ENCODE measurements at regions of chr7 and their contacts with region 1.

Region 1: GRCh38 chr7:44200647-44201461 is at the start of gene YKT6:
- DNase-seq: peak; percentile 93 to 96 (median 96)
- ATAC-seq: peak; percentile 99
- H3K4me3 ChIP-seq: peak within 1 kb of the TSS; percentile 92
- H3K27ac ChIP-seq: peak within 1 kb of the TSS; percentile 56
- H3K4me1 ChIP-seq: peaks cover 3% of the 10 kb centered on the region
- H3K27me3 ChIP-seq: no peaks in the 10 kb centered on the region
- total RNA-seq, gene YKT6: 48.1 to 63.4 (median 52.2) TPM

Region 2: DNA sequence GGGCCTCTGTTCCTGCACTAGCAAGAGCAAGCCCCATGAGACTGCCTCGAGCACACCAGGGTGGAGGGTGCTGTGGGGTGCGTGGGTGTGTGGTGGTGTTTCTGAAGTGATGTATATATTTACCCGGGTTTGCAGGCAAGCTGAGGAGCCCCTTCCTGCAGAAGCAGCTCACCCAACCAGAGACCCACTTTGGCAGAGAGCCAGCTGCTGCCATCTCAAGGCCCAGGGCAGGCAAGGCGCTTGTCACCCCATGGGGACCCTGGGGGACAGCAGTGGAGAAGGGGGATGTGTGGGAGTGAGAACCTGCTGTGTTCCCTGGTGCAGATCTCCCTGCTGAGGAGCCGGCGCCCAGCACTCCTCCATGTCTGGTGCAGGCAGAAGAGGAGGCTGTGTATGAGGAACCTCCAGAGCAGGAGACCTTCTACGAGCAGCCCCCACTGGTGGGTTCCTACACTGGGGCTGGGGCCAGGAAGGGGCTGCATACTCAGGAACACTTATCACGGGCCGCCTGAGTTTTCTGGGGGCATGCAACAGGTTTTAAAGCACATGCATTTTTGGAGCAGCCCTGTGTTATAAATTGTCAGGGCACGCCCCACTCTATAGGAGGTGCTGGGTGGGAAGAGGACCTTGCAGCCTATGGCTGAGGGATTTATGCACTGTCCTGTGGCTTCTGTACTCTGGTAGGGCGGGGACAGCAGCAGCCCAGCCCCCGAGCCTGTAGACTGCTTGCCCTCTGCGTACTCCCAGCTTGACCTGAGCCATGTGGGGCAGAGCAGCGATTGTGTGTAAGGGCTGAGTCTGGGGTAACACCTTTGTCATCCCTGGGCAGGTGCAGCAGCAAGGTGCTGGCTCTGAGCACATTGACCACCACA is 141.4 kb before region 1 on chr7:
- intact Hi-C with region 1: loop called in 1 of 4 experiments (anchors 10 kb)
- DNase-seq: peak in 2 of 3 donors; percentile 48 to 49
- ATAC-seq: no peak
- H3K4me3 ChIP-seq: no peak overlapping the region
- H3K27ac ChIP-seq: no peak overlapping the region
- H3K4me1 ChIP-seq: no peaks in the 10 kb centered on the region
- H3K27me3 ChIP-seq: no peaks in the 10 kb centered on the region

Region 3: GRCh38 chr7:44072364-44073231 is 128.3 kb before region 1 on chr7:
- intact Hi-C with region 1: loop called in 2 of 4 experiments (anchors 10 kb)
- DNase-seq: peak; percentile 91 to 94 (median 94)
- ATAC-seq: peak; percentile 39 to 75
- H3K4me3 ChIP-seq: no peak overlapping the region
- H3K27ac ChIP-seq: peak overlapping the region; percentile 28
- H3K4me1 ChIP-seq: peaks cover 3% of the 10 kb centered on the region
- H3K27me3 ChIP-seq: no peaks in the 10 kb centered on the region

Region 4: DNA sequence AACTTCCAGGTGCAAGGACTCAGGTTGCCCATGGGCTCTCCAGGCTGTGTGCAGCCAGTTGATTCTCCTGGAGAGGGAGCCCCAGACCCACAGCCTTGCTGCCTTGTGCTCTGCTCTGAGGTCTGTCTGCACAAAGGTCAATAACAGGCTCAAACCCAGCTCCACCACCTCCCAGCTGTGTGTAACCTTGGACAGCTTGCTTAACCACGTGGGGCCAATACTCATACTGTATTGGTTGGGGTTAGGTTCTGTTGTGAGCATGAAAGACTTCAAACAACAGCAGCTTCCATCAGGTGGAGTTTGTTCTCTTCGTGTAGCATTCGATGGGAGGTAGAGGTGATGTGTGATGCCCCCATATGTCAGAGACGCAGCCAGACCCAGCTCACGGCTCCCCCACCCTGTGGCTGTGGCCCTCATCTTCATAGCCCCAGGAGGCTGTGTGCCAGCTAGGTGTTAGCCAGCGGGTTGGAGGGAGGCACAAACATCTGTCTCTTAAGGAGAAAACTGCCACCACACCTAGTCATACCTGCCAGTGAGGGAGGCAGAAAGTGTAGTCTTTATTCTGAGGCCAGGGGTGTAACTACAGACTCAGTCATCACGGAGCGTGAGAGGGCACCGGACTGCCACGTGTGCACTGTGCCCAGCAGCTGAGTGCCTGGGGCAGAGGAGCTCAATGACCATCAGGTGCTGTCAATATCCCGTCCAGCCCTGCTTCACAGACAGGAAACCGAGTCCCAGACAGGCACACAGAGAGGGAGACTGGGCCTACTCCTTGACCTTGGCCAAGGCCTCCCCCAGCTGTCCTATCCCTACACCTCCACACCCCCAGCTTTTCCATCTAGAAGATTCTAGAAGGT is 69.5 kb before region 1 on chr7:
- intact Hi-C with region 1: loop called in 1 of 4 experiments (anchors 10 kb)
- DNase-seq: peak in 2 of 3 donors; percentile 16 to 36
- ATAC-seq: peak; percentile 31 to 44
- H3K4me3 ChIP-seq: no peak overlapping the region
- H3K27ac ChIP-seq: peak overlapping the region; percentile 92
- H3K4me1 ChIP-seq: peaks cover 7% of the 10 kb centered on the region
- H3K27me3 ChIP-seq: no peaks in the 10 kb centered on the region

Measured in right cardiac atrium (tissue), 5 donors.